A549 (cell line): ENCODE measurements at regions of chr1 and their contacts with region 1.

Region 1: DNA sequence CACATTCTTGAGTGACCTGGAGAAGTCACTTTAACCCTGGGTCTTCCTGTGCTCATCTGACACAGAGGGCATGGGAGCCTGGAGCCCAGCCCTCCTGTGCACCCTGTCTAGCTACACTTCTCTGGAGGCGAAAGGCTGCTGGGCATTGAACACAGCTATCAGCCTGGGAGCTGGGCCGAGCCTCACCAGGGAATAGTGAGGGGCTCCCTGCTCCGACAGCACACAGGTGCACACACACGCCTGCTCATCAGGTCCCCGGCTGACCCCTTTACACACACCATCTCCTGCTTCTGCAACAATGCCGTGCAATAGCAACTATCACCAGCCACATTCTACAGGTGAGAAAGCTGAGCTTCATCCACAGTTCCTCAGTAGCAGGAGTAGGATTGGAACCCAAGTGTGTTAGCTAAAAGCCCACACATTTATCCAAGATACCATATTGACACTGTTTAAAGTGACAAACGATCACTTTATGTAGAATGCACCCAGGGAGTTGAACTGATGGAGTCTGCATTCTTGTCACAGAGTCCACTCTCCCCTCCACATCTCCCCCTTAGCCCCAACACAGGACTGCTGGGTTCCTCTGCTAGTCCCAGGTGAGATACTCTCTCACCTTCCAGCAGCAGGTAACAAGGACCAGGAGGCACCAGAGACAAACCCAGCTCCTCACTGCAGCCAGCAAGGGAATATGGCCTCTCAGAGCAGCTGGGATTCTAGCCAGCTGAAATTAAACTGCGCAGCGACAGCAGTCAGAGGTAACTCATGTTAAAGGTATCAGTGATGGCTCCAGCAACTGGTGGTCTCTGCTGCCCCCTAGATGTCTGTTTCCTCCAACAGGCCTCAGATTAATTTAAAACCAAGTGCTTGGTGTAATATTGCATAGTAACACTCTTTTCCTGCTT is 18.3 kb upstream of the CAPN8 start:
- DNase-seq: peak in 1 of 2 experiments; percentile 68
- ATAC-seq: peak; percentile 86 to 92
- H3K4me3 ChIP-seq: no peak overlapping the region
- H3K27ac ChIP-seq: no peak overlapping the region; a peak in 1 of 6 replicates
- H3K4me1 ChIP-seq: no peaks in the 10 kb centered on the region
- CTCF ChIP-seq: peak; percentile 93
- EP300 ChIP-seq: no peak
- POLR2A ChIP-seq: no peak
- RAD21 ChIP-seq: peak; percentile 97 to 99

Region 2: DNA sequence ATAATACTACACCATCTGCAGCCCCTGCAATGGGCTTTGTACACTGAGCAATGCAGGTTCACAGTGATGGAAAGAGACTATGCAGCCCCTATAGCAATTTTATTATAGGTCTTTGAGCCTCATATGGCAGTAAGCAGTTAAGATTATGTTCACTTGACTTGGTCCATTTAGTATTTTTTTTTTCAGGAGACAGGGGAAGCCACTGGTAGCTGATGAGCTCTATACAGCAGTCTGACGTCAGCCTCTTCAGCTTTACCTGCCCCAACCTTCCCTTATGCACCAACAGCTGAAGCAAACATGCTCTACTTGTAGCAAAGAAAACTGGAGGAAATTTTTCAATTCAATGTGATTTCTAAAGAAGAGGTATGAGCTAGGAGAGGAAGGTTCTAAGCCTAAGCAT is 1003.8 kb before region 1 on chr1:
- CTCF ChIA-PET with region 1: no interaction called
- POLR2A ChIA-PET with region 1: no interaction called
- DNase-seq: no peak
- ATAC-seq: no peak
- H3K4me3 ChIP-seq: no peak overlapping the region
- H3K27ac ChIP-seq: no peak overlapping the region
- H3K4me1 ChIP-seq: no peaks in the 10 kb centered on the region
- CTCF ChIP-seq: no peak
- EP300 ChIP-seq: no peak
- POLR2A ChIP-seq: no peak
- RAD21 ChIP-seq: no peak

Region 3: GRCh38 chr1:223133824-223134435 is 549.9 kb before region 1 on chr1:
- CTCF ChIA-PET with region 1: interaction called, 98 read pairs
- POLR2A ChIA-PET with region 1: interaction called, 4 read pairs
- DNase-seq: peak; percentile 78 to 87
- ATAC-seq: peak; percentile 77 to 90
- H3K4me3 ChIP-seq: peak overlapping the region; percentile 49
- H3K27ac ChIP-seq: peak overlapping the region; percentile 54 to 55; a peak in 4 of 6 replicates
- H3K4me1 ChIP-seq: peaks cover 38% of the 10 kb centered on the region
- CTCF ChIP-seq: peak; percentile 93
- EP300 ChIP-seq: no peak
- POLR2A ChIP-seq: no peak
- RAD21 ChIP-seq: peak; percentile 71 to 82

Region 4: DNA sequence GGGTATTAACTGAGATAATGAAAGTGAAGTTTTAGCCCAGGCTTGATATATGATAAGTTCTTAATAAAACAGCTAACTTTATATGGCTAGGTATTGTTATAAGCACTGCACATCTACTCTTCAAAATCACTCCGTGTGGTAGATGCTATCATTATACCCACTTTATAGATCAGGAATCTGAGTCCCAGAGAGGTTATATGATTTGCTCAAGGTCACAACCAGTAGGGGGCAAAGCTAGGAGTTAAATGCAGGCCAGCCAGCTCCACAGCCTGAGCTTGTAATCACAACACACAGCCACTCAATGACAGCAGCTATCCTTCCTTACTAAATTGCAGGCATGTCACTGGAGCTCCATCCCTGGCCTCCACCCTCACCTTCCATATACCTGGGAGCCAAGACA is 134.1 kb before region 1 on chr1:
- CTCF ChIA-PET with region 1: interaction called, 10 read pairs
- POLR2A ChIA-PET with region 1: no interaction called
- DNase-seq: no peak
- ATAC-seq: no peak
- H3K4me3 ChIP-seq: no peak overlapping the region
- H3K27ac ChIP-seq: no peak overlapping the region
- H3K4me1 ChIP-seq: 0 out of 3 replicates have a peak, but pooled peaks cover 4% of the 10 kb centered on the region
- CTCF ChIP-seq: no peak
- EP300 ChIP-seq: no peak
- POLR2A ChIP-seq: no peak
- RAD21 ChIP-seq: no peak

Region 5: GRCh38 chr1:223611936-223612335 is 71.9 kb before region 1 on chr1:
- CTCF ChIA-PET with region 1: interaction called, 15 read pairs
- POLR2A ChIA-PET with region 1: no interaction called
- DNase-seq: no peak
- ATAC-seq: no peak
- H3K4me3 ChIP-seq: no peak overlapping the region
- H3K27ac ChIP-seq: no peak overlapping the region
- H3K4me1 ChIP-seq: no peaks in the 10 kb centered on the region
- CTCF ChIP-seq: no peak
- EP300 ChIP-seq: no peak
- POLR2A ChIP-seq: no peak
- RAD21 ChIP-seq: no peak

Region 6: DNA sequence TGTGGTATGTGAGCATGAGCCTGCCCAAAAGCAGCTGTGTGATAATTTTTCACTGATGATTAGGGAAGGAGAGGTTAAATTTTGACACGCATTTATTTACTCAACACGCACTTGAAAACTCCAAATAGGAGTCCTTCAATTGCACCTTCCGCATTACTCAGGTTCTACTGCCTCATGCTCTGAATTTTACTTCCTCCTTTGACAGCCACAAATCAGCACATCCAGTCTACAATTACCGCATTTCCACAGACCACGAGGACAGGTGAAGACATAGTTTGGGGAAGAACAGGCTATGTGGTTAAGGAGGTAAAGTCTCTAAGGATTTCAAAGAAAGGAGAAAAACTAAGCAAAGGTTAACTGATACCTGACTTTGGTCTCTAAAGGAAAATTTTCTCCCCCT is 20.9 kb before region 1 on chr1:
- CTCF ChIA-PET with region 1: interaction called, 16 read pairs
- POLR2A ChIA-PET with region 1: no interaction called
- DNase-seq: no peak
- ATAC-seq: no peak
- H3K4me3 ChIP-seq: no peak overlapping the region
- H3K27ac ChIP-seq: no peak overlapping the region
- H3K4me1 ChIP-seq: peaks cover 20% of the 10 kb centered on the region
- CTCF ChIP-seq: no peak
- EP300 ChIP-seq: no peak
- POLR2A ChIP-seq: no peak
- RAD21 ChIP-seq: no peak

Region 7: DNA sequence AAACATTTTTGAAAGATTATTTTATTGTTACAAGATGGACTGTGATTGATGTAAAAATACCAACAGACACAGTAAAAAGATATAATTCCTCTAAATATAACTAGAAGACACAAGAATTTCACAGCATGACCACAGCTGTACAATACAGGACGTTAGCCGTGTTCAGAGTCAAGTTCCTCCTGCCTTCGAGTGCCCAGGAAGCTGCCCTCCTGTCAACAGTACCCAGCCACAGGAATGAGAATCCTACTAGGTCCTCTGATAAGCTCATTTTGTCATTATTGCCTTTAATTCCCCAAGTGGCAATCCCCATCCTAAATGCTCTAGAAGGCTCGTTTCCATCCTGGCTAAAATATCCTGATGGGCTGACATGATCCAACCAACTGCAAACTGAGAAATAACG is 12.1 kb after region 1 on chr1:
- CTCF ChIA-PET with region 1: interaction called, 14 read pairs
- POLR2A ChIA-PET with region 1: no interaction called
- DNase-seq: no peak
- ATAC-seq: no peak
- H3K4me3 ChIP-seq: no peak overlapping the region
- H3K27ac ChIP-seq: no peak overlapping the region
- H3K4me1 ChIP-seq: peaks cover 26% of the 10 kb centered on the region
- CTCF ChIP-seq: no peak
- EP300 ChIP-seq: no peak
- POLR2A ChIP-seq: no peak
- RAD21 ChIP-seq: no peak